ENCODE measurements at regions of chrX and their contacts with region 1.

Region 1: GRCh38 chrX:47384502-47384901 is 14.1 kb downstream of the ZNF157 start:
- DNase-seq: peak; percentile 57
- H3K4me3 ChIP-seq: no peak overlapping the region
- H3K27ac ChIP-seq: no peak overlapping the region
- H3K4me1 ChIP-seq: no peaks in the 10 kb centered on the region
- H3K27me3 ChIP-seq: no peaks in the 10 kb centered on the region
- CTCF ChIP-seq: peak; percentile 46 to 51
- POLR2A ChIP-seq: no peak

Region 2: DNA sequence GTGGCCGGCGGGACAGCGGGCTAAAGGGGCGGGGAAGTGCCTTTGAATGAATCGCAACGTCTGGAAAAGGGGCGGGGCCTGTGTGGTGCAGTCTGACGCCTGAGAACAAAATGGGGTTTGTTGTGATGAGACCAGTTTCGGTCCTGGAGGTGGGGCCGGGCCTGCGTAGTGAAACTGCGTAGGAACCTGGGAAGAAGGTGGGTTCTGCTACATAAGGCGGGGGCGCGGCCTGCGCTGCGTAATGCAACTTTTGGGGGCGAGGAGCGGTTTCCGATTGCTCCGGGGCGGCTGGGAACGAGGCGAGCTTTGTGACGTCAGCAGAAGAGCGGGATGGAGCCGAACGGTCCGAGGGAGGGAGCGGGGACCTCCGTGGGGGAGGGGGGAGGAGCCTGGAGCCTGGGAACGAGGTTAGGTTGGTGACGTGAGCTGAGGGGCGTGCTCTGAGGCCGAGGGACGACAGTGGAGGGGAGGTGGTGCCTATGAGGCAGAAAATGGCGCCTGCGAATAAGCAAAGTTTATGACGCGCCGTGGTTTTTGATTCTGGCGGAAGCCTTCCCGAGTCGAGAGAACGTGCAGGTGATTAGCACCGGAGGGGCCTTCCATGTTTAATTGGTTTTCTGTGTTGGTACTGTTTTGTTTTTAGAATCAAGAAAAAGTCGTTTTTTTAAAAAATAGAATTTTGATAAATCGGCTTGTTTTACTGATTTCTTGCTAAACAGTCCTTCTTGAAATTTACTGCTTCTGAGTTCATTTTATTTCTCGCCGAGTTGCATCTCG is 151.0 kb before region 1 on chrX:
- CTCF ChIA-PET with region 1: interaction called, 15 read pairs
- POLR2A ChIA-PET with region 1: no interaction called
- dilution Hi-C with region 1: no loop called
- intact Hi-C with region 1: loop called (anchors 5 kb)
- DNase-seq: peak; percentile 93
- H3K4me3 ChIP-seq: peak overlapping the region; percentile 42 to 96 (median 74)
- H3K27ac ChIP-seq: peak overlapping the region; percentile 95
- H3K4me1 ChIP-seq: peaks cover 3% of the 10 kb centered on the region
- H3K27me3 ChIP-seq: no peaks in the 10 kb centered on the region
- CTCF ChIP-seq: no peak
- POLR2A ChIP-seq: peak; percentile 56

Measured in endothelial cell of umbilical vein (primary cell).